ENCODE measurements at regions of chr2 and their contacts with region 1.

Region 1: DNA sequence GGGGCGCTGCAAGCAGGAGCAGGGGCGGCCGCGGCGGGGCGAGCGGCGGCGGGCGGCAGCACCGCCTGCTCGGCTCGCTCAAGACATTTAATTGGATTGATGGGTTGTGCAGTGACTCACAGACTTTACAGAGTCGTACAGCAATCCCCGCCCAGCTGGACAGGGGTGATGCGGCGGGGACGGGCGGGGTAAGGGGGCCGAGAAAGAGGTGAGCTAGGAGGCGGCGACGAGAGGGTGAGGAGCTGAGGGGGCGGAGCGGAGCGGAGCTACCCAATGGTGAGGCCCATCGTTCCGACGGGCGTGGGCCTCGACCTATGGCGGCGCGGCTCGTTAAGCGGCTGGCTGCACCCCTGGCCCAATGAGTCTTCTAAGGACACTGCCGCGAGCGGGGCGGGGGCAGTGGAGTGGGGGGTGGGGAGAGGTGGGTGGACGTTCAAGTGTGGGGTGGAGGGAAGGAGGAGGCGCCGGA is 97.1 kb upstream of the SERTAD2 start:
- DNase-seq: peak in 8 of 9 donors; percentile 87 to 97 (median 96)
- ATAC-seq: peak; percentile 90
- H3K4me3 ChIP-seq: peak overlapping the region; percentile 98
- H3K4me3 Mint-ChIP-seq: peak overlapping the region; percentile 91 to 100 (median 99)
- H3K27ac ChIP-seq: peak overlapping the region; percentile 91
- H3K27ac Mint-ChIP-seq: peak overlapping the region; percentile 91 to 99 (median 96)
- H3K4me1 ChIP-seq: peaks cover 3 to 13% of the 10 kb centered on the region in 2 donors
- H3K4me1 Mint-ChIP-seq: peaks cover 5 to 34% (median 29%) of the 10 kb centered on the region in 7 donors
- H3K27me3 ChIP-seq: no peaks in the 10 kb centered on the region
- H3K27me3 Mint-ChIP-seq: no peaks in the 10 kb centered on the region

Region 2: GRCh38 chr2:64101141-64101591 is 649.7 kb before region 1 on chr2:
- CTCF ChIA-PET with region 1: no interaction called
- POLR2A ChIA-PET with region 1: no interaction called
- intact Hi-C with region 1: loop called in 1 of 2 experiments (anchors 1 kb)
- DNase-seq: peak in 6 of 9 donors; percentile 10 to 57 (median 44)
- ATAC-seq: peak; percentile 56
- H3K4me3 ChIP-seq: no peak overlapping the region
- H3K4me3 Mint-ChIP-seq: peak overlapping the region in 9 of 10 donors; percentile 18 to 83 (median 55)
- H3K27ac ChIP-seq: peak overlapping the region; percentile 33
- H3K27ac Mint-ChIP-seq: peak overlapping the region; percentile 44 to 88 (median 80)
- H3K4me1 ChIP-seq: peaks cover 0 to 16% of the 10 kb centered on the region in 2 donors
- H3K4me1 Mint-ChIP-seq: peaks cover 14 to 66% (median 60%) of the 10 kb centered on the region in 7 donors
- H3K27me3 ChIP-seq: no peaks in the 10 kb centered on the region
- H3K27me3 Mint-ChIP-seq: no peaks in the 10 kb centered on the region

Region 3: DNA sequence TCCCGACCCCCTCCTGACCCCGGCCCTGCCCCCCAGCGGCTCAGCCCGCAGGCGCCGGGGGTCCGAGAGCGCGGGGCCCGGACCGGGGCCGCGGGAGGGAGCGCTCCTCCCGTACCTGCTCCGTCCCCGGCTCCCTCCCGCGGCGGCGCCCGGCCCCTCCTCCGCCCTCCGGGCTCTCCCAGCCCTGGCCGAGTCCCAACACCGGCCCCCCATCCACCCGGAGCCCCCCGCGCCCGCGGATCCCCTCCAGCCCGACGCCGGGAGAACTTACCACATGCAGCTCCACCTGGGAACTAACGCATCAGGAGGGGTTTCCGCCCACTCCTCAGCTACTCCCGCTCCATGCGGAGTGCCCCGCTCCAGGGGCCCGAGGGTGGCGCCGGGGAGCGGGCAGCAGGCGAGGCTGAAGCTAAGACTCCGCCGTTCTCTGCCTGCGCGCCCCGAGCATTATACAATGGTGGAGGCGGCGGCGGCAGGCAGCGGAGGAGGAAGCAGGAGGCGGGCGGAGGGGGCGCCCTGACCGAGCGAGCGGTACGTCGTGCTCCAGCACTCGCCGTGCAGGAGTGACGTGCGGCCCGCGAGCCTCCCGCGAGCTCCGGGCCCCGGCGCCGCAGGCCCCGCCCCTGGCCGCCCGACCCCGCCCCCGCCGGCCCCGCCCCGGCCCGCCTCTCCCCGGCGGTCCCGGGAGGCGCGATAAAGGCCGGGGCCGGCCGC is 97.3 kb before region 1 on chr2 and contains the start of gene SERTAD2:
- CTCF ChIA-PET with region 1: interaction called, 87 read pairs
- POLR2A ChIA-PET with region 1: interaction called, 433 read pairs
- intact Hi-C with region 1: loop called (anchors 1 kb)
- DNase-seq: peak; percentile 80 to 89 (median 86)
- ATAC-seq: peak; percentile 93
- H3K4me3 ChIP-seq: peak within 1 kb of the TSS; percentile 66
- H3K4me3 Mint-ChIP-seq: peak within 1 kb of the TSS; percentile 84 to 99 (median 96)
- H3K27ac ChIP-seq: peak within 1 kb of the TSS; percentile 90
- H3K27ac Mint-ChIP-seq: peak within 1 kb of the TSS; percentile 81 to 98 (median 94)
- H3K4me1 ChIP-seq: peaks cover 8 to 45% of the 10 kb centered on the region in 2 donors
- H3K4me1 Mint-ChIP-seq: peaks cover 44 to 84% (median 80%) of the 10 kb centered on the region in 7 donors
- H3K27me3 ChIP-seq: no peaks in the 10 kb centered on the region
- H3K27me3 Mint-ChIP-seq: no peaks in the 10 kb centered on the region
- total RNA-seq, gene SERTAD2: 34.3 to 43.8 (median 40.1) TPM

Region 4: DNA sequence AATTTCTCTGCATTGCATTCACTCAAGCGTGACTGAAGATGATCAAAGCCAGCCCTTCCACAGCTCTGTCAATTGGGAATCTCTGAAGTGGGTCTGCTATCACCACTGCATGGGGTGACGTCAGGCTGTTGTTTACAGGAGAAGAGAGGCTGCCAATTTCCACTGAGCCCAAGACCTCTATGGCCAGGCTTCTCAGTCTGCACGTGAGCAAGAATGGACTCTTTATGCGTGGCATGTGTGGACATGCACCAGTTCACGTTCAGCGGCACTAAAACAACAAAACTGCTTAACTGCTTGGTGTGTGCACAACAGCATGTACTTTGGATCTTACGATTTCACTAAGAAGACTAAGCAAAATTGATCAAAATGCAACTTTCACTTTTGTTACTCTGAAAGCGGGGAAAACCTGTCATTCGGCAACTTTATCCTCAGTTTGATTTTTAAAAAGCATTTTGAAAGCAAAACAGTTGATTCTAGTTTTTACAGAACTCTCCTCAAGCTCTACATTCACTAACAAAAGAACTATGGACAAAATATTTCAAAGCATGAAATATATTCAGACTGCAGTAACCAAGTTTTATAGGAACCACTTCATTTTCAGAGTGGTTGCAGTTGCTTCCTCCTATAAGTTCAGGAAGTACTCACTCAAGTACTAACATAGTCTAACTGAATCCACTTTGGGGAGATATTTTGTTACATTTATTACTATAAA is 20.1 kb before region 1 on chr2:
- CTCF ChIA-PET with region 1: interaction called, 5 read pairs
- POLR2A ChIA-PET with region 1: interaction called, 98 read pairs
- intact Hi-C with region 1: loop called (anchors 1 kb)
- DNase-seq: peak in 8 of 9 donors; percentile 41 to 72 (median 51)
- ATAC-seq: peak; percentile 80
- H3K4me3 ChIP-seq: peak overlapping the region; percentile 66
- H3K4me3 Mint-ChIP-seq: peak overlapping the region; percentile 80 to 95 (median 88)
- H3K27ac ChIP-seq: peak overlapping the region; percentile 71
- H3K27ac Mint-ChIP-seq: peak overlapping the region; percentile 95 to 99 (median 98)
- H3K4me1 ChIP-seq: peaks cover 31 to 32% of the 10 kb centered on the region in 2 donors
- H3K4me1 Mint-ChIP-seq: peaks cover 26 to 80% (median 71%) of the 10 kb centered on the region in 7 donors
- H3K27me3 ChIP-seq: no peaks in the 10 kb centered on the region
- H3K27me3 Mint-ChIP-seq: no peaks in the 10 kb centered on the region

Region 5: GRCh38 chr2:64831134-64831976 is 80.5 kb after region 1 on chr2:
- CTCF ChIA-PET with region 1: interaction called, 4 read pairs
- POLR2A ChIA-PET with region 1: interaction called, 18 read pairs
- intact Hi-C with region 1: loop called (anchors 1 kb)
- DNase-seq: peak; percentile 61 to 89 (median 78)
- ATAC-seq: peak; percentile 95
- H3K4me3 ChIP-seq: peak overlapping the region; percentile 7
- H3K4me3 Mint-ChIP-seq: peak overlapping the region in 1 of 10 donors; percentile 8
- H3K27ac ChIP-seq: no peak overlapping the region
- H3K27ac Mint-ChIP-seq: peak overlapping the region in 1 of 9 donors; percentile 72
- H3K4me1 ChIP-seq: peaks cover 0 to 9% of the 10 kb centered on the region in 2 donors
- H3K4me1 Mint-ChIP-seq: peaks cover 0 to 25% (median 4%) of the 10 kb centered on the region in 7 donors
- H3K27me3 ChIP-seq: no peaks in the 10 kb centered on the region
- H3K27me3 Mint-ChIP-seq: peaks cover 0 to 9% (median 4%) of the 10 kb centered on the region in 5 donors

Region 6: DNA sequence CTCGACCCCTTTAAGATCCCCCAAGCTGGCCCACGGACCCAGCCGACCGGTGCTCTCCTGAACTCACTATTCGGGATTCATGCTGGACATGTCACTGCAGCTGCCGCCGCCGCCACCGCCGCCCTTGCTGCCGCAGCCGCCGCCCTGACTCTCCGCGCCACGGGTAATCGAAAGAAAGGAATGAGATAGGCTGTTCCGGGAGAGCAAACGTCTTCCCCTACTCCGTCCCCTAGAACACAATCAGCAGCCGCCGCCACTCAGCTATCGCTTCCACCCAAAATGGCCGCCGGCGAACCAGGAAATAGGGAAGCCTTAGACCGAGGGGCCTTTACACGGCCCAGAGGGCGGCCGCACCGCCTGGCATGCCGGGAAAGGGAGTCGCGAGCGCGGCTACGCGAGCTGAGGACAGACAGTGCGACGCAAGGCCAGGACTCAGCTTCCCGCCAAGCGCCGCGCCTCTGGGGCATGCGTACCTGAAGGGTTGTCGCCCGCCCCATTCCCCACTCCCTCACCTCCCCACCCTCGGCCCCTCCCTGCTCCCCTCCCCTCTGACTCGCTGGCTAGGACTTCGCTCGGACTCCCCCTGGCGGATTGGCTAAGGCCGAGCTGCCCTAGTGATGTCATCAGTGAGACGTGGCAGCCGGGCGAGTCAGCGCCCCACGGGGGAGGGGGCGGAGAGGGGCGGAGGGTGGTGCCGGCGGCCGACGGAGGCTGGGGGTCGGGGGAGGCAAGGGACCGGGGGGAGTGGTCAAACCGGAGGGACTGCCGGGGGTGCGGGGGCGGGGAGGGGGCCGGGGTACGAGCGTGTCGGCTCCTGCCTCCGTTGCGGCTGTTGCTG is 379.2 kb after region 1 on chr2 and contains the start of gene RAB1A:
- CTCF ChIA-PET with region 1: no interaction called
- POLR2A ChIA-PET with region 1: interaction called, 4 read pairs
- intact Hi-C with region 1: loop called (anchors 1 to 2 kb)
- DNase-seq: peak; percentile 91 to 99 (median 98)
- ATAC-seq: peak; percentile 94
- H3K4me3 ChIP-seq: peak within 1 kb of the TSS; percentile 78
- H3K4me3 Mint-ChIP-seq: peak within 1 kb of the TSS; percentile 90 to 100 (median 98)
- H3K27ac ChIP-seq: peak within 1 kb of the TSS; percentile 98
- H3K27ac Mint-ChIP-seq: peak within 1 kb of the TSS; percentile 95 to 100 (median 99)
- H3K4me1 ChIP-seq: peaks cover 24 to 25% of the 10 kb centered on the region in 2 donors
- H3K4me1 Mint-ChIP-seq: peaks cover 24 to 47% (median 35%) of the 10 kb centered on the region in 7 donors
- H3K27me3 ChIP-seq: no peaks in the 10 kb centered on the region
- H3K27me3 Mint-ChIP-seq: peaks cover 0 to 17% (median 0%) of the 10 kb centered on the region in 5 donors
- total RNA-seq, gene RAB1A: 48.8 to 78.6 (median 65.8) TPM